Heart right ventricle (tissue), 16 donors: ENCODE measurements at regions of chr20 and their contacts with region 1.

Region 1: GRCh38 chr20:59966428-59966827 is 8.2 kb downstream of the CDH26 start:
- DNase-seq: no peak
- ATAC-seq: no peak
- H3K4me3 ChIP-seq: no peak overlapping the region
- H3K27ac ChIP-seq: no peak overlapping the region
- H3K4me1 ChIP-seq: peaks cover 0 to under 1% (median 0%) of the 10 kb centered on the region in 9 donors
- H3K27me3 ChIP-seq: no peaks in the 10 kb centered on the region
- CTCF ChIP-seq: no peak

Region 2: GRCh38 chr20:60024801-60025200 is 58.4 kb after region 1 on chr20:
- intact Hi-C with region 1: loop called in 1 of 10 experiments (anchors 10 kb)
- DNase-seq: no peak
- ATAC-seq: no peak
- H3K4me3 ChIP-seq: no peak overlapping the region
- H3K27ac ChIP-seq: no peak overlapping the region
- H3K4me1 ChIP-seq: no peaks in the 10 kb centered on the region
- H3K27me3 ChIP-seq: no peaks in the 10 kb centered on the region
- CTCF ChIP-seq: no peak